ENCODE measurements at regions of chr5 and their contacts with region 1.

Region 1: GRCh38 chr5:69234457-69235268 is at the start of gene CDK7:
- DNase-seq: peak; percentile 95
- H3K4me3 Mint-ChIP-seq: peak within 1 kb of the TSS; percentile 97
- H3K27ac Mint-ChIP-seq: peak within 1 kb of the TSS; percentile 77
- H3K4me1 Mint-ChIP-seq: peaks cover 33% of the 10 kb centered on the region
- H3K27me3 Mint-ChIP-seq: no peaks in the 10 kb centered on the region
- total RNA-seq, gene CDK7: 23.8 to 28.4 TPM

Region 2: DNA sequence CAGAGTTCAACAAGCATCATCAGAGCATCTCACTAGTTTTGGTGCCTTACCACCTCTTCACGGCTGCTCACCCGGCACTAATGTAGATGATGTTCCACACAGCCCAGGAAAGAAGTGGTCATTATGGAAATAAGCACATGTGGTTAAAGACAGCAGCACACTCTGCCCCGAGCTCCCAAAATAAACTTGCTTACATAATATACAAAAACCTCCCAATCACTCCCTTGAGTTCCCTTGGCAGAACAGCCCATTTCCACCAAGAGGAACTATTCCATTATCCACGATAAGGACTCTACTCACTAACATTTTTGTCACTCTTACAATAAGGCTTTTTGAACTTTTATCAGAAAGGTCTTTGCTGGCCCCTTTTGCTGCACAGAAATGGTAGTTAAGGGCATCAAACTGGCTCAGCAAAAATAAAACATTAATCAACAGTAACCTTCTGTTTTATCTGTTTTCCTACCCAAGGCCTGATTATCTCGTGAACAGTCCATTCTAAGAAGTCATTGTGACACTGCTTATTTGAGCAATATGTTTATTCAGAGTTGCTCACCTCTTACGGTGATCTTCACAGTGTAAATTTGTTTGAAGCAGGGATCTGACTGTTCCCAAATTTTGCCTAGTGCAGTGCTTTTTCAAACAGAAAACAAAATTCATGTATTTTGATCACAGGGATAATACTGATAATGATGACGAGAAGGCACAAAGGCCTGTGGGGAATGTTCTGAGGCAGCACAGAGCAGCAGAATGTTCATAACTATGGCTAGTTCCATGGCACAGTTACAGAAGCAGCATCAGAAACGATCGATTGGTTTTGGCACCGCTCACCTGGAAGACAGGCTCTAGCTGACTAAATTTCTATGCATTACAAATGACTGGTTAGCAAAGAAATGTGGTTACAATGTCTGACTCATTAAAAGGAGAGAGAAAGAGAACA is 1418.9 kb before region 1 on chr5:
- CTCF ChIA-PET with region 1: no interaction called
- intact Hi-C with region 1: no loop called
- DNase-seq: no peak
- H3K4me3 Mint-ChIP-seq: no peak overlapping the region
- H3K27ac Mint-ChIP-seq: no peak overlapping the region
- H3K4me1 Mint-ChIP-seq: no peaks in the 10 kb centered on the region
- H3K27me3 Mint-ChIP-seq: no peaks in the 10 kb centered on the region

Region 3: DNA sequence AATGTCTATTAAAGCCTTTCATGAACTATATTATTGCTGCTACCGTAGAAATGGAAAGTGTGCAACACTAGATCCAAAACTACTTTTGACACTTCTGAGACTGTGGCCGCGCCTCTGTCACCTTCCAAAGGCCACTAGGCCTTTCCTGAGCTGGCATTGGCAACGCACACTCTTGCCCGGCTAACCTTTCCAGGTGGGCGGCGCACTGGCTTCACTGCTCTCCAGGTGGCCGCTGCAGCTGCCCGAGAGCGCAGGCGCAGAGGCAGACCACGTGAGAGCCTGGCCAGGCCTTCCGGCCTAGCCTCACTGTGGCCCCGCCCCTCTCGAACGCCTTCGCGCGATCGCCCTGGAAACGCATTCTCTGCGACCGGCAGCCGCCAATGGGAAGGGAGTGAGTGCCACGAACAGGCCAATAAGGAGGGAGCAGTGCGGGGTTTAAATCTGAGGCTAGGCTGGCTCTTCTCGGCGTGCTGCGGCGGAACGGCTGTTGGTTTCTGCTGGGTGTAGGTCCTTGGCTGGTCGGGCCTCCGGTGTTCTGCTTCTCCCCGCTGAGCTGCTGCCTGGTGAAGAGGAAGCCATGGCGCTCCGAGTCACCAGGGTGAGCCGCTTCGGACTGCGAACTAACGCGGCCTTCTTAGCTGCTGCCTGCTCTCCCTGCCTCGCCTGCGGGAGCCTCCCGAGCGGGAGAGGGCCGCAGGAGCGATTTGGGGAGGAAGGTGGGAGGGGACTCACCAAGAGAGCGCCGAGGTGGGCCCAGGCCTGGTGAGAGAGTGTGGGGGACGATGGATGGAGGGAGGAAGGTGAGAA is 67.8 kb before region 1 on chr5 and contains the start of gene CCNB1:
- CTCF ChIA-PET with region 1: no interaction called
- intact Hi-C with region 1: loop called (anchors 2 kb)
- DNase-seq: peak; percentile 99
- H3K4me3 Mint-ChIP-seq: peak within 1 kb of the TSS; percentile 95
- H3K27ac Mint-ChIP-seq: peak within 1 kb of the TSS; percentile 87
- H3K4me1 Mint-ChIP-seq: peaks cover 20% of the 10 kb centered on the region
- H3K27me3 Mint-ChIP-seq: no peaks in the 10 kb centered on the region
- total RNA-seq, gene CCNB1: 209 to 211 TPM

Region 4: GRCh38 chr5:69217548-69218526 is 16.8 kb before region 1 on chr5:
- CTCF ChIA-PET with region 1: interaction called, 4 read pairs
- intact Hi-C with region 1: loop called (anchors 1 kb)
- DNase-seq: peak; percentile 93
- H3K4me3 Mint-ChIP-seq: peak overlapping the region; percentile 99
- H3K27ac Mint-ChIP-seq: peak overlapping the region; percentile 93
- H3K4me1 Mint-ChIP-seq: peaks cover 14% of the 10 kb centered on the region
- H3K27me3 Mint-ChIP-seq: no peaks in the 10 kb centered on the region

Region 5: GRCh38 chr5:69334793-69335268 is 100.2 kb after region 1 on chr5:
- CTCF ChIA-PET with region 1: interaction called, 7 read pairs
- intact Hi-C with region 1: loop called (anchors 2 kb)
- DNase-seq: peak; percentile 88
- H3K4me3 Mint-ChIP-seq: peak overlapping the region; percentile 24
- H3K27ac Mint-ChIP-seq: no peak overlapping the region
- H3K4me1 Mint-ChIP-seq: peaks cover 13% of the 10 kb centered on the region
- H3K27me3 Mint-ChIP-seq: no peaks in the 10 kb centered on the region